Right cardiac atrium (tissue), 5 donors: ENCODE measurements at regions of chr9 and their contacts with region 1.

Region 1: GRCh38 chr9:96856363-96857286 is 2.3 kb upstream of the ZNF782 start:
- DNase-seq: peak; percentile 33 to 80 (median 69)
- ATAC-seq: peak; percentile 55 to 59
- H3K4me3 ChIP-seq: no peak overlapping the region
- H3K27ac ChIP-seq: no peak overlapping the region
- H3K4me1 ChIP-seq: peaks cover 12% of the 10 kb centered on the region
- H3K27me3 ChIP-seq: no peaks in the 10 kb centered on the region

Region 2: GRCh38 chr9:96344458-96345180 is 512.0 kb before region 1 on chr9:
- intact Hi-C with region 1: no loop called
- DNase-seq: peak; percentile 61 to 68 (median 67)
- ATAC-seq: peak; percentile 88 to 95
- H3K4me3 ChIP-seq: no peak overlapping the region
- H3K27ac ChIP-seq: peak overlapping the region; percentile 48
- H3K4me1 ChIP-seq: peaks cover 2% of the 10 kb centered on the region
- H3K27me3 ChIP-seq: no peaks in the 10 kb centered on the region

Region 3: GRCh38 chr9:97109194-97109811 is 252.7 kb after region 1 on chr9:
- intact Hi-C with region 1: loop called in 2 of 4 experiments (anchors 5 to 10 kb)
- DNase-seq: peak in 1 of 3 donors; percentile 55
- ATAC-seq: peak; percentile 40 to 52
- H3K4me3 ChIP-seq: no peak overlapping the region
- H3K27ac ChIP-seq: no peak overlapping the region
- H3K4me1 ChIP-seq: no peaks in the 10 kb centered on the region
- H3K27me3 ChIP-seq: no peaks in the 10 kb centered on the region

Region 4: GRCh38 chr9:97398999-97399758 is 542.6 kb after region 1 on chr9:
- intact Hi-C with region 1: loop called in 3 of 4 experiments (anchors 2 to 5 kb)
- DNase-seq: peak; percentile 63 to 87 (median 82)
- ATAC-seq: peak; percentile 75 to 86
- H3K4me3 ChIP-seq: no peak overlapping the region
- H3K27ac ChIP-seq: no peak overlapping the region
- H3K4me1 ChIP-seq: peaks cover 3% of the 10 kb centered on the region
- H3K27me3 ChIP-seq: no peaks in the 10 kb centered on the region

Region 5: GRCh38 chr9:97406620-97407177 is 550.1 kb after region 1 on chr9:
- intact Hi-C with region 1: loop called in 1 of 4 experiments (anchors 5 kb)
- DNase-seq: no peak
- ATAC-seq: no peak
- H3K4me3 ChIP-seq: no peak overlapping the region
- H3K27ac ChIP-seq: no peak overlapping the region
- H3K4me1 ChIP-seq: no peaks in the 10 kb centered on the region
- H3K27me3 ChIP-seq: no peaks in the 10 kb centered on the region

Region 6: GRCh38 chr9:97660340-97660739 is 803.7 kb after region 1 on chr9:
- intact Hi-C with region 1: no loop called
- DNase-seq: no peak
- ATAC-seq: peak in 1 of 2 donors; percentile 51
- H3K4me3 ChIP-seq: no peak overlapping the region
- H3K27ac ChIP-seq: no peak overlapping the region
- H3K4me1 ChIP-seq: no peaks in the 10 kb centered on the region
- H3K27me3 ChIP-seq: no peaks in the 10 kb centered on the region